ENCODE measurements at regions of chr6 and their contacts with region 1.

Region 1: DNA sequence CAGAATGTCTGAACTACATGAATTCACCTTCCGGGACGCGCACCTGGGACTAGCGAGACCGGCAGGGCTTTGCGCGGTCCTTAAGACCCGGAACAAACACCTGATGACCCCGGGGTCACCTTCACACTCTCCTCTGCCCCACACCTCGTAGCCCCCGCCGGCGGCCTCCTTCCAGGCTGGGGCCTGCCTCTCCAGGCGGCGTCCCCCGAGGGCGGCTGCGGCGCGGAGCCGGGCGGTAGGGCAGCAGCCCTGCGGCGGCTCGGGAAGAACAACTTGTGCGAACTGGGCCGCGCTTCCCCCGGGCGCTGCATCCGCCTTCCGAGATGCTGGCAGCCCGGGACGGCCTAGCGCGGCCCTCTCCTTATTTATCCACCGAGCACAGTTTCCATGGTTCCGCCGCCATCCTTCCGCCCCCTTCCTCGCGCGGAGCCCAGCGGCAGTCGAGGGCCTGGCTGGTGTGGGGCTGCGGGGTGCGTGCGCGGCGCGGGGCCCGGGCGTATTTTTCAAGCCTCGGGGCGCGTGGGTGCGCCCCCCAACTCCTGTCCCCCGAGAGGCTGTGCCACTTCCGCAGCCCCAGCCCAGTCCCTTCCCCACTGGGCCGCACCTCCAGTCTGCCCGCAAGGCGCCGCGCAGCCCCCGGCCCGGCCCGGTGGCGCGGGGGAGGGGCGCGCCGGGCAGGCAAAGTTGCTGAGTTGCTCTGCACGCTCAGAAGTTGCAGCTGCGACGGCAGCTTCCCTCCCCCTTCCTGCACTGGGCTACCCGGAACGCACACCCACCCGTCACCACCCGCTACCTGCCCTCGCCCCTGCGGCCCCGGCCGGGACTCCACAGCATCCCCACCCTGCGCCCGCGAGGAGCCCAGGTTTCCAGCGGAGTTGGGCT is 56.3 kb upstream of the RREB1 start:
- DNase-seq: peak; percentile 13 to 77 (median 59)
- ATAC-seq: peak; percentile 79
- H3K4me3 ChIP-seq: peak overlapping the region; percentile 59 to 79
- H3K4me3 Mint-ChIP-seq: peak overlapping the region; percentile 81
- H3K27ac ChIP-seq: peak overlapping the region in 1 of 2 experiments; percentile 50
- H3K27ac Mint-ChIP-seq: peak overlapping the region; percentile 82
- H3K4me1 ChIP-seq: peaks cover 5% of the 10 kb centered on the region
- H3K4me1 Mint-ChIP-seq: peaks cover 15% of the 10 kb centered on the region
- H3K27me3 ChIP-seq: no peaks in the 10 kb centered on the region
- H3K27me3 Mint-ChIP-seq: no peaks in the 10 kb centered on the region
- CTCF ChIP-seq: no peak

Region 2: GRCh38 chr6:7073821-7074525 is 22.5 kb after region 1 on chr6:
- CTCF ChIA-PET with region 1: interaction called, 4 read pairs
- POLR2A ChIA-PET with region 1: interaction called, 7 read pairs
- intact Hi-C with region 1: loop called in 1 of 2 experiments (anchors 1 kb)
- DNase-seq: peak; percentile 16 to 82 (median 55)
- ATAC-seq: peak; percentile 99
- H3K4me3 ChIP-seq: peak overlapping the region in 1 of 2 experiments; percentile 20
- H3K4me3 Mint-ChIP-seq: peak overlapping the region; percentile 80
- H3K27ac ChIP-seq: no peak overlapping the region
- H3K27ac Mint-ChIP-seq: peak overlapping the region; percentile 91
- H3K4me1 ChIP-seq: no peaks in the 10 kb centered on the region
- H3K4me1 Mint-ChIP-seq: peaks cover 11% of the 10 kb centered on the region
- H3K27me3 ChIP-seq: no peaks in the 10 kb centered on the region
- H3K27me3 Mint-ChIP-seq: no peaks in the 10 kb centered on the region
- CTCF ChIP-seq: no peak

Region 3: GRCh38 chr6:7367408-7367807 is 315.9 kb after region 1 on chr6:
- CTCF ChIA-PET with region 1: no interaction called
- POLR2A ChIA-PET with region 1: no interaction called
- intact Hi-C with region 1: no loop called
- DNase-seq: no peak
- ATAC-seq: no peak
- H3K4me3 ChIP-seq: no peak overlapping the region
- H3K4me3 Mint-ChIP-seq: no peak overlapping the region
- H3K27ac ChIP-seq: no peak overlapping the region
- H3K27ac Mint-ChIP-seq: no peak overlapping the region
- H3K4me1 ChIP-seq: no peaks in the 10 kb centered on the region
- H3K4me1 Mint-ChIP-seq: no peaks in the 10 kb centered on the region
- H3K27me3 ChIP-seq: no peaks in the 10 kb centered on the region
- H3K27me3 Mint-ChIP-seq: no peaks in the 10 kb centered on the region
- CTCF ChIP-seq: no peak